Right lobe of liver (tissue), 6 donors: ENCODE measurements at regions of chr6 and their contacts with region 1.

Region 1: DNA sequence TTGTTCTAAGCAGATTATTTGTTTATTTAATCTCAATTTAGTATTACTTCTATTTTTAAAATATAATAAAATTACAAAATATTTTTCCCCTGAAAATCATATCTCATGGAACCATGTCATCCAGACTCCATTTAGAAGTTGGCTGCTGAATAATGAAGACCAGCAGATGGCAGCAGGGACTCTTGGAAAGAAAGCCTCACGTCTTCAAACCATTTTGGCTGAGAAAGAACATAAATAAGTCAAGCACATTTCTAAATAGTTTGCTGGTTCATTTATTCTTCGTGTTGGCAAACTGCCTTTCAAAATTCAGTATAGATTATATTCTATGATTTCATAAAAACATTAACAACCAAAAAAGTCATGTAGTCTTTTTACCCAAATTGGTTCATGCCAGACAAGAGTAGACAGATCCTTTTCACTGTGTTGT is 71.7 kb downstream of the RCAN2 start:
- DNase-seq: peak in 1 of 3 donors; percentile 55
- ATAC-seq: peak; percentile 75 to 86 (median 80)
- H3K4me3 ChIP-seq: no peak overlapping the region
- H3K27ac ChIP-seq: no peak overlapping the region
- H3K4me1 ChIP-seq: no peaks in the 10 kb centered on the region
- H3K27me3 ChIP-seq: no peaks in the 10 kb centered on the region
- CTCF ChIP-seq: peak; percentile 80 to 87 (median 83)
- POLR2A ChIP-seq: no peak

Region 2: DNA sequence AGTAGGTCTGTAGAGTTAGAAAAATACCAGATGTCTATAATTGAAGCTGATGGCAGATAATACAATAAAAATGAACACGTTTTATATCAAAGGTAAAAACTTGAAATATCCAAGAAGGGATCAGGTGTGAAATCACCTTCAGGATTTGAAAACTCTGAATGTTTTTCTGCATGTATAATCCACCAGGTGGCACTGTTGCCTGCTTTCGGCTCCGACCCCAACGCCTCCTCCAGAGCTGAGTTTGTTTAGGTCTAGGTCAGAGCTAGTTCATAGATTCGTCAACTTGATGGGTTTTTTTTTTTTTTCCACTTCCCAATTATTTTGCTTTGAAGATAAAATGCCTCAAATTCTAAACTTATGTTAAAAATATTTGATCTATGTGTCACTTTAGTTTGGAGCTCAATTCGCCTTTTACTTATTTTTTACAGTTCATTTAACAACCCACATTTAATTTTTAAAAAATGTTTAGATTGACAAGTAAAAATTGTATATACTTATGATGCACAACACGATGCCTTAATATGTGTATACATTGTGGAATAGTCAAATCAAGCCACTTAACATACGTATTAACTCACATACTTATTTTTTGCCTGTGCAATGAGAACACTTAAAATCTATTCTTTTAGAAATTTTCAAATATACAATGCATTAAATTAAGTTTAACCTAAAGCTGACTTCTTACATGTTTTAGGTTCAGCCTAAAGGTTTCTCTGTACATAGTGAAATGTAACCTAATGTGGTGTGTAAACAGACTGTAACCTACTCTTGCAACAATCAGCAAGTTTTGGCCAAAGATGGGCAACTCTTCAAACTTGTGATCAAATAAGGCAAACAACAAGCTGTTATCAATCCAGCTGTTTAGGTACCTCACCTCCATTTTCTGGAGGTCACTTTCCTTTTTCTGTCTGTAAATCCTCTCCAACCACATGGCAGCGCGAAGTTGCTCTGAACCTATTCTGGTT is 329.2 kb before region 1 on chr6:
- intact Hi-C with region 1: loop called in 1 of 2 experiments (anchors 10 kb)
- DNase-seq: peak; percentile 40 to 63 (median 57)
- ATAC-seq: peak; percentile 93 to 98 (median 94)
- H3K4me3 ChIP-seq: no peak overlapping the region
- H3K27ac ChIP-seq: no peak overlapping the region
- H3K4me1 ChIP-seq: peaks cover 0 to 3% (median 0%) of the 10 kb centered on the region in 4 donors
- H3K27me3 ChIP-seq: no peaks in the 10 kb centered on the region
- CTCF ChIP-seq: peak; percentile 55 to 81 (median 78)
- POLR2A ChIP-seq: no peak

Region 3: DNA sequence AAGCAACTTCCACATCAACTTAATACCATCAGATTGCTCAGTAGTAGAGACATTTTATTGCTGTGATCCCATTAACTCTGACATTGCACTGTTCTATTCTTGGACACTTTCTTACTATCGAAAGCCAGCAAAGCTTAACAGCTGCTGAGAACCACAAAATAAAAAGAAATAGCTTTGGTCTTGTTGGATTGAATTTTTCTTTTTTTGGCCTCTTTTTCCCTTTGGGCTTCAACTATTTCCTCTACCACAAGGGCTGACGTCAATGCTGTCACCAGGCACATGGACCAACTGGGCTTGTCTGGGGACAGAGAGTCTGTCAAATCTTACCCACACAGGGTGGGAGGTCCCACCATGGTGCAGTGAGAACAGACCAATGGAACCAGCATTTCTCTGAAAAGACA is 185.4 kb before region 1 on chr6:
- intact Hi-C with region 1: loop called in 1 of 2 experiments (anchors 10 kb)
- DNase-seq: no peak
- ATAC-seq: no peak
- H3K4me3 ChIP-seq: no peak overlapping the region
- H3K27ac ChIP-seq: no peak overlapping the region
- H3K4me1 ChIP-seq: no peaks in the 10 kb centered on the region
- H3K27me3 ChIP-seq: no peaks in the 10 kb centered on the region
- CTCF ChIP-seq: no peak
- POLR2A ChIP-seq: no peak

Region 4: GRCh38 chr6:46626228-46626909 is 206.8 kb after region 1 on chr6:
- intact Hi-C with region 1: loop called (anchors 10 kb)
- DNase-seq: no peak
- ATAC-seq: peak; percentile 70 to 80 (median 75)
- H3K4me3 ChIP-seq: no peak overlapping the region
- H3K27ac ChIP-seq: no peak overlapping the region
- H3K4me1 ChIP-seq: no peaks in the 10 kb centered on the region
- H3K27me3 ChIP-seq: no peaks in the 10 kb centered on the region
- CTCF ChIP-seq: peak; percentile 65 to 71 (median 67)
- POLR2A ChIP-seq: no peak

Region 5: DNA sequence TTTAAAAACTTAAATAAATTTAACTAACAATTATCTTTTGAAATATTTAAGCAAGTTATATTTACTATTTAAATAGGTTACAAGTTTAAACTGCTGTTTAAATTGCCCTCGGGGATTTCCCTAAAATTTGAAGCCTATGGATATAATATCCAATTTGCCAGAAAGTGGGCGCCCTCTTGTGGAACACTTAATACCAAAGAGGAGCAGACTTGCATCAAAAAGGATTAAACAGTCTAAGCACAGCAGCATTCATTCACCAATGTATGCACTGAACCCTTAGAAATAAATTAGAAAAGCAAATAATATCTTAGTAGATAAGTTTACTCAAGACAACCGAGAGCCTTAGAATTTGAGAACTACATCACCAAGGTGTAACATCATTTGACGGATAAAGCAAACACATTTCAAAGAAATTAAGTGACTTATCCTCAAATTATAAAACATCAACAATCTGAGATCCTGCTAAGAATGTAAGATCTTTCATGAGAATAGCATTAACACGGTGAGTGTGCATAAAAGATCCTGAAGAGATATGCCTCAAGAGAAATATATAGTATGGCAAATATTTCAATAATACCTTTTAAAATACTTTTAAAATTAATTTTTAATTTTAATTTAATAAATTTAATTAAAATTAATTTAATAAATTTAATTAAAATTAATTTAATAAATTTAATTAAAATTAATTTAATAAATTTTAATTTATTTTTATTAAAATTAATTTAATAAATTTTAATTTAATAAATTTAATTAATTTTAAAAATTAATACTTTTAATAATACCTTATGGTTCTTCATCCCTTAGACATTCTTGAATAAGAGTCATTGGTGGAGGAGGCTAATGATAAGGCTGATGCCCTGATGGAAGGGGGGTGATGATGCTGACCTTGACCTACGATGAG is 362.1 kb after region 1 on chr6:
- intact Hi-C with region 1: loop called in 1 of 2 experiments (anchors 10 kb)
- DNase-seq: peak in 1 of 3 donors; percentile 56
- ATAC-seq: peak; percentile 70 to 82 (median 80)
- H3K4me3 ChIP-seq: no peak overlapping the region
- H3K27ac ChIP-seq: no peak overlapping the region
- H3K4me1 ChIP-seq: no peaks in the 10 kb centered on the region
- H3K27me3 ChIP-seq: no peaks in the 10 kb centered on the region
- CTCF ChIP-seq: peak; percentile 69 to 78 (median 75)
- POLR2A ChIP-seq: no peak